ENCODE measurements at regions of chr7 and their contacts with region 1.

Region 1: DNA sequence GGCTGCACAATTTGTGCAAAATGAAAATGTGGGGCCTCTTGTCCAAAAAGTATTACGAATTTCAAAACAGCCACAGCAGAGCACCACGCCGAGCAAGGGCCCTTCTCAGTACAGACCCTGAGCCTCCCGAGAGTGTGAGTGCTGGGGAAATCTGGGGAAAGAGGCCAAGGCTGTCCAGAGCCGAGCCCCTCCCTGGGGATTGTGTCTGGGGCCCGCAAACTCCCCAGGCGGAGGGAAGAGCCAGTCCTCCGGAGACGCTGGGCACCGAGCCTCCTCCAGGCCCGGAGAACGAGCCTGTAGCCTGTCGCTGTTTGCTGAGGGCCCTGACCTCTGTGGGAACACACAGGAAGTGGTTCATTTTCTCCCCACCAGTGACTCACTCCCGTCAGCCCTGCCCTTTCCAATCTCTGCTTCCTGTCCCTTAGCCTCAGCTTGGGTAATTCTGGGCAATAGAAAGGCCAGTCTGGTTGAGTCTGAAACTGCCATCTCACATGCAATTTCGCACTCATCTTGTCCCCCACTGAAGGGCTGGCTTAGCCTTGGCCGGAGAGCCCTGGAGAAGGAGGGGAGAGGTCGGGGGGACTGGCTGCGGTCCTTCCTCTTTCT is 19.5 kb upstream of the GNA12 start:
- DNase-seq: peak; percentile 48
- H3K4me3 ChIP-seq: no peak overlapping the region
- H3K27ac ChIP-seq: peak overlapping the region in 1 of 2 experiments; percentile 82; a peak in 2 of 4 replicates
- H3K4me1 ChIP-seq: peaks cover 3 to 13% of the 10 kb centered on the region in 2 experiments; a peak in 3 of 4 replicates
- H3K27me3 ChIP-seq: no peaks in the 10 kb centered on the region
- CTCF ChIP-seq: no peak
- EP300 ChIP-seq: no peak; a peak in 1 of 4 replicates
- RAD21 ChIP-seq: no peak

Region 2: GRCh38 chr7:2760098-2760889 is 103.3 kb before region 1 on chr7:
- CTCF ChIA-PET with region 1: interaction called, 10 read pairs
- POLR2A ChIA-PET with region 1: no interaction called
- DNase-seq: peak; percentile 85
- H3K4me3 ChIP-seq: no peak overlapping the region
- H3K27ac ChIP-seq: peak overlapping the region; percentile 72 to 97; a peak in 2 of 4 replicates
- H3K4me1 ChIP-seq: peaks cover 22 to 57% of the 10 kb centered on the region in 2 experiments
- H3K27me3 ChIP-seq: no peaks in the 10 kb centered on the region
- CTCF ChIP-seq: peak; percentile 69
- EP300 ChIP-seq: 0 out of 4 replicates have a peak, but pooled peaks of 1 of the 2 experiments have one; percentile 10
- RAD21 ChIP-seq: peak; percentile 68

Region 3: GRCh38 chr7:2844165-2844898 is 19.2 kb before region 1 on chr7 and contains the start of gene GNA12:
- CTCF ChIA-PET with region 1: interaction called, 26 read pairs
- POLR2A ChIA-PET with region 1: no interaction called
- DNase-seq: peak; percentile 100
- H3K4me3 ChIP-seq: peak within 1 kb of the TSS; percentile 58 to 70
- H3K27ac ChIP-seq: peak within 1 kb of the TSS in 1 of 2 experiments; percentile 73; a peak in 2 of 4 replicates
- H3K4me1 ChIP-seq: peaks cover 3 to 8% of the 10 kb centered on the region in 2 experiments; a peak in 2 of 4 replicates
- H3K27me3 ChIP-seq: no peaks in the 10 kb centered on the region
- CTCF ChIP-seq: no peak
- EP300 ChIP-seq: no peak
- RAD21 ChIP-seq: no peak
- polyA plus RNA-seq, gene GNA12: 55.3 and 64.8 TPM in 2 replicates

Region 4: DNA sequence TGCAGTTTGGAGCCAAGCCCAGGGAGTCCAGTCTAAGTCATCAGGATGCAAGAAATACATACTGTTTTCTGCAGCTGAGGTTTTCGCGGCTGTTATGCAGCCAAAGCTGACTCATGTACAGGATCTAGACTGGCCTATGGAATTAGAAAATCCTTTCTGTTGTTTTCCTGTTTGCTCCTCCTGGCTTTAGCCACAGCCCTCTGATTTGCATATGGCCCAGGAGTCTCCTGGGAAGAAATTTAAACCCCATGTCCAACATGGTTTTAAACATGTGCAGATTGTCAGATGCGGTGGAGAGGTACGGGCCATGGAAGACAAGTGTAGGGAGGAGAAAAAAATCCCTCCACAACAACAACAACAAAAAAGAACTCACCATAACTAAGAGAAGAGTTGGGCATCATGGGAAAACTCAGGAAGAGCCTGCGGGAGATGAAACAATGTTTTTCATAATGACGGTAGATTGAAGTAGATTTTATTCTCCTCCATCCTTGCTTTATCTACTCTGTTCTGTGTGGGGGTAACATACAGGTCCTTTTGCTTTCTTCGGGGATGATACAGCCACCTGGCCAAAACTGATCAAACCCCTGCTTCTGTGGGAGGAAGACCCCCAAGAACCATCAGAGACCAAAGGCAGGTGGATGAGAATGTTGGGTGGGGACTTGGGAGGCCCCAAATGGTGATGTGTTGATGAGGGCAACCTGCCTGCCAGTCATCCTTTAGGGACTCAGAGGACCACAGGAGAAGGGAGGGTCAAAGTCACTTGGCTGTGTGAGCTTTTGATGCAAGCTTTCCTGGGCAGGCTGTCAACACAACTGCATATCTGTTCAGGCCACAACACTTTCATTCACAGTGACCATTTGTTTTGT is 10.4 kb after region 1 on chr7:
- CTCF ChIA-PET with region 1: interaction called, 41 read pairs
- POLR2A ChIA-PET with region 1: no interaction called
- DNase-seq: peak; percentile 43
- H3K4me3 ChIP-seq: no peak overlapping the region
- H3K27ac ChIP-seq: peak overlapping the region in 1 of 2 experiments; percentile 81; a peak in 2 of 4 replicates
- H3K4me1 ChIP-seq: peaks cover 0 to 11% of the 10 kb centered on the region in 2 experiments; a peak in 1 of 4 replicates
- H3K27me3 ChIP-seq: no peaks in the 10 kb centered on the region
- CTCF ChIP-seq: no peak
- EP300 ChIP-seq: no peak
- RAD21 ChIP-seq: no peak

Region 5: DNA sequence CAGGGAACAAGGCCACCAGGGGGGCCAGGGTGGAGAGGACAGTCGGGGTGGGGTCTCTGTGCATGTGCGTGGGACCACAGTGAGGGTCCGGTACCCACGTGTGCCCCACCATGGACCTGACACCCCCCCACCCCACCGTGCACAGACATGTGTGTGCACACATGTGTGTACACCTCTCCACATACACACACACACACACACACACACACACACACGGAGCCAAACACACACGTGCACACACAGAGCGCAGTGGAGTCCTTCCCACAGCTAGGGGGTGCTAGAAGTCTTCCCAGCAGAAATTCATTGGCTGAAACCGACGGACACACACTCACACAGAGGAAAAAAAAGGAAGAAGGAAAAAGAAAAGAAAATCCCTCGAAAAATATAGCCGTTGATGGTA is 23.3 kb after region 1 on chr7:
- CTCF ChIA-PET with region 1: interaction called, 28 read pairs
- POLR2A ChIA-PET with region 1: no interaction called
- DNase-seq: peak; percentile 91
- H3K4me3 ChIP-seq: peak overlapping the region in 1 of 2 experiments; percentile 33; a peak in 1 of 4 replicates
- H3K27ac ChIP-seq: no peak overlapping the region
- H3K4me1 ChIP-seq: peaks cover 0 to 2% of the 10 kb centered on the region in 2 experiments; a peak in 1 of 4 replicates
- H3K27me3 ChIP-seq: no peaks in the 10 kb centered on the region
- CTCF ChIP-seq: peak; percentile 92
- EP300 ChIP-seq: no peak
- RAD21 ChIP-seq: peak; percentile 99

Region 6: DNA sequence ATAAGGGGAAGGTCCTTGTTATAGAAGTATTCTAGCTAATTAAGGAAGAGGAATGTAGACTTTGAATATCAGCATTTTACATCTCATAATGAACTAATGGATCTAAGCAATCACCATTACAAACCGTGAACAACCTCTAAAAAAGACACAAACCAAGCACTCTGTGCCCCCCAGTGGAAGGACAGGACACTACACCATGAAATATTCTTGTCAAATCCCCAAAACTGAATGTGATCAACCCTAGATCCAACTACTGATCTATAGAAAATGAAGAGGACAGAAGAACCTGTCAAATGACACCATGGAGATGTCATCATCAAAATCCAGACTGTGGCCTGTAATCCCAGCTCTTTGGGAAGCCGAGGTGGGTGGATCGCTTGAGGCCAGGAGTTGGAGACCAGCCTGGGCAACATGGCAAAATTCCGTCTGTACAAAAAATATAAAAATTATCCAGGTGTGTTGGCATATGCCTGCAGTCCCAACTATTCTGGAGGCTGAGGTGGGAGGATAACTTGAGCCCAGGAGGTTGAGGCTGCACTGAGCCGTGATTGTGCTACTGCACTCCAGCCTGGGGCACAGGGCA is 291.4 kb after region 1 on chr7:
- CTCF ChIA-PET with region 1: interaction called, 10 read pairs
- POLR2A ChIA-PET with region 1: no interaction called
- DNase-seq: peak; percentile 73
- H3K4me3 ChIP-seq: no peak overlapping the region
- H3K27ac ChIP-seq: no peak overlapping the region
- H3K4me1 ChIP-seq: no peaks in the 10 kb centered on the region
- H3K27me3 ChIP-seq: no peaks in the 10 kb centered on the region
- CTCF ChIP-seq: peak; percentile 76
- EP300 ChIP-seq: no peak
- RAD21 ChIP-seq: peak; percentile 94

Region 7: DNA sequence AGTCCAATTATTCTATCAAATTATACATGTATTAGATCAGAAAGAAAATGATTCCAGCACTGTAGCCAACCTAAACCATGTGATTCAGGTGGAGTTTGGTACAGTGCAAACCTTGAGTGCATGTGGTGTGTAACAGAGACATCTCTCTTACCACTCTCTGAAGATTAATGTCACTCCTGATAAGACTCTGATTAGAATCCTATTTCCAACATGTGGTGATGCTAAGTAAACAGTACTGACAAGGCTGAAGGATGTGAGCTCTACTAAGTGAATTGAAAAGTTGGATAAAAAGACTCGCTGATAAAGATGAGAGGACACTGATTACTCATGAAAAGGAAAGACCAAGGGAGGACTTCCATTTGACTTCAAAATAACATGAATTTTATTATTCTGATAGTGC is 669.5 kb after region 1 on chr7:
- CTCF ChIA-PET with region 1: no interaction called
- POLR2A ChIA-PET with region 1: no interaction called
- DNase-seq: no peak
- H3K4me3 ChIP-seq: no peak overlapping the region
- H3K27ac ChIP-seq: no peak overlapping the region
- H3K4me1 ChIP-seq: peaks cover 0 to 3% of the 10 kb centered on the region in 2 experiments; a peak in 1 of 4 replicates
- H3K27me3 ChIP-seq: no peaks in the 10 kb centered on the region
- CTCF ChIP-seq: no peak
- EP300 ChIP-seq: no peak
- RAD21 ChIP-seq: no peak

Region 8: GRCh38 chr7:4631664-4632171 is 1768.2 kb after region 1 on chr7:
- CTCF ChIA-PET with region 1: interaction called, 18 read pairs
- POLR2A ChIA-PET with region 1: no interaction called
- DNase-seq: peak; percentile 88
- H3K4me3 ChIP-seq: peak overlapping the region in 1 of 2 experiments; percentile 29; a peak in 1 of 4 replicates
- H3K27ac ChIP-seq: no peak overlapping the region
- H3K4me1 ChIP-seq: peaks cover 0 to 5% of the 10 kb centered on the region in 2 experiments; a peak in 1 of 4 replicates
- H3K27me3 ChIP-seq: no peaks in the 10 kb centered on the region
- CTCF ChIP-seq: peak; percentile 74
- EP300 ChIP-seq: no peak
- RAD21 ChIP-seq: peak; percentile 95